Activated T-helper 2 cell treated with anti-CD3 and anti-CD28 coated beads, Interferon-gamma antibody, Interleukin-2, Interleukin-4, amounts not matched to agents 10 μg/mL and 5 μg/mL and 100 μg/mL, durations not matched to agents 14 hours and 24 hours and 36 hours (primary cell): ENCODE measurements at regions of chr12 and their contacts with region 1.

Region 1: DNA sequence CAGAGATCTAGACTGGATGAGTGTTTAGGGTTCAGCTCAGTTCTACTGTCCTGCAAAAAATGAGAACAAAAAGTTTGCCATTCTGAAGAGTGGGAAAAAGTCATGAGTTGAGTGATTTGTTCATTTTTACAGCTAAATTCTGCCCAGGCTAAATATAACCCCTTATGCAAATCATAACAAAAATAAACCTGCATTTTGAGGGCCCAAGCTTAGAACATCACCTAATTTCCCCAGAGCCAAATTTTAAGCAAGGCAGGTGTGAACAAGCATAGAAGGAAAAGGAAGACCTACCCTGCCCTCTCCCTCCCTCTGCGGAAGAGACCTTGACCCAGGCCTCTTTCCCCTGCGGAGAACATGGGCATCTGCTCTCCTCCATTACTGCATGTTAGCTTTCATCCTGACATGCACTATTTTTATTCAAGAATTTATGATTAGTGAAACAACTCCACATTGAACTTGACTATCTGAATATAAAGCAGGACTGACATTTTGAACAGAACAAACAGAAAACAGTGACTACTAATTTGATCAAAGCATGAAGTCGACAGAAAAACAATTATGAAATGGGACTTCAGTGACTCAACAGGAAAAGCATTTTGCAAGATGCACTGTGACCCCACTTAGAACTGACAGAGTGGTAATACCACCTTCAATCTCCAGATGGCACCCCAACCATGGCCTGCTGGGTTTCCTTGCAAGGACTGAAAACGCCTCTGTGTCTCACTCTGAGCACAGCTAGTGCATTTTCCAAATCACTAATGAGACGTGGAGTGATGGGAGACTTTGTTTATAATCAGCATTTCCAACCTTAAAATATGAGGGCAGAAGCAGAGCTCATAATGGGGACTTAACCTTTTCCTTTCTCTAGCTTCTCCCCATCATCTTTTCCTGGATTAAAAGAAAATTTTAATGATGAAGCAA is 30.9 kb upstream of the SELPLG start:
- DNase-seq: peak; percentile 75
- H3K4me3 Mint-ChIP-seq: no peak overlapping the region
- H3K27ac Mint-ChIP-seq: peak overlapping the region; percentile 85
- H3K4me1 Mint-ChIP-seq: peaks cover 24% of the 10 kb centered on the region
- H3K27me3 Mint-ChIP-seq: no peaks in the 10 kb centered on the region

Region 2: DNA sequence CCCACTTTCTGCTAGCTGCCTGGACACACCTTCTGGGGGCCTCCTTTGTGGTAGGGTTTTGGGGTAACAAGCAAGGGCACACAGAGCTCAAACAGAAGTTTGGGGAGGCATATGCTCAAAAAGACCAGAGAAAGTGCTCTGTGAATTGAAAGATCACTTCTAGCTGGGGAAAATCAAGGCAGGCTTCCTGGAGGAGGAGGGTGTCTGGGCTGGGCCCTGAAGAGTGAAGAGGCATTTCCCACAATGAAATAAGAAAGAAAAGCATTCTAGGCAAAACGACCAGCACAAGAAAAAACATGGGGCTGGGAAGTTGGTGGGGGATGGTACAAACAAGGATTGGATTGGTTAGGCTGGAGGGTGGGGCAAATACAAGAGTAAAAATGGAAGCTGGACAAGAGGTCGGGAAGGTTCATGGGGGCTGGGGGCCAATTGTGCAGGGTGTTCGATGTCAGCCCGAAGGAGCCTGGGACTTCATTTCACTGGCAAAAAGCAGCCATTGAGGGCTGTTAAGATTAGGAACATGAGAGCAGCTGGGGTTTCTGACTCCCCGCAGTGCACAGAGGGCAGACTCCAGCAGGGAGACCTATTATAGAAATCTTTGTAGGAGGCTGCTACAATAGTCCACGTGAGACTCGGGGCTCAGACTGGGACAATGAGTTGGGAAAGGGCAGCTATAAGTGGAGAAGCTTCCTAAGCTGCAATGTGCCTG is 273.9 kb before region 1 on chr12:
- intact Hi-C with region 1: no loop called
- DNase-seq: no peak
- H3K4me3 Mint-ChIP-seq: no peak overlapping the region
- H3K27ac Mint-ChIP-seq: no peak overlapping the region
- H3K4me1 Mint-ChIP-seq: no peaks in the 10 kb centered on the region
- H3K27me3 Mint-ChIP-seq: no peaks in the 10 kb centered on the region

Region 3: DNA sequence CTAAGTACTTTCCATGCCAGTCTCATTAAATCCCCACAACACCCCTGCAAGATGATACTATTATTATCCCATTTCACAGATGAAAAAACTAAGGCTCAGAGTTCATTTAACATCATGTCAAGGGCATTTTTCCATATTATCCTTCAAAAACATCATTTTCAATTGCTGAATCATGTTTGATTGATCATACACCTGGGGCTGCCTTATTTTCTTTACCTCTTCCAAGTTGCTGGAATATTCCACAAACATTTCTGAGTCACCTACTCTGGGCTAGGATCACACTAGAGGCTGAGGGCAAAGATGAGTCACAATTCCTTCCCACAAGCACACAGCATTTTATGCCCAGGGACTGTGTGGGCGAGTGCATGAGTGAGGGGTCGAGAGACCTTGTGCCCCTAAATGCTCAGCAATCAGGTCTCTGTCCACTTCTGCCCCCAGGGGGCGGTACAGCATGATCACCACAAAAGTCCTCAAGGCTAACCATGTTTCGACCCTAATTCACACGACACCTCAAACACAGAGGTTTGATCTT is 52.6 kb before region 1 on chr12:
- intact Hi-C with region 1: no loop called
- DNase-seq: peak; percentile 28
- H3K4me3 Mint-ChIP-seq: no peak overlapping the region
- H3K27ac Mint-ChIP-seq: no peak overlapping the region
- H3K4me1 Mint-ChIP-seq: peaks cover 18% of the 10 kb centered on the region
- H3K27me3 Mint-ChIP-seq: peaks cover 10% of the 10 kb centered on the region

Region 4: DNA sequence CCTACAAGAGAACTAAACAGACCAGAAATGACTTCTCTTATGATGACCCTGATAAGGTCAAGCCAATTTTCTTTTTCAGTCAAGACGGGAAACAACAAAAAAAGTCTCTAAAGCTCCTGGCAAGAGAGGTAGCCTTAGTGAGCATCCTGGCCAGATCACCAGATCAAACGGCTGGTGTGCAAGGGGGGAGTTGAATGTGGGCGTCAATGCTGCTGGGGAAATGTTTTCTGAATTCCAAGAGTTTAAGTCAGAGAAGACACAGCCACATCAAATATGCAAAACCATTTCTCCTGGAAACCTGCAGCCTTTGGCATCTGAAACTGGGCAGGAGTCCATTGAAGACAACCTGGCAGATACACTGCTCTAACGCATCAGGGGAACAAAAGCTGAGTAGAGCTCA is 14.9 kb before region 1 on chr12:
- intact Hi-C with region 1: loop called (anchors 2 kb)
- DNase-seq: no peak
- H3K4me3 Mint-ChIP-seq: no peak overlapping the region
- H3K27ac Mint-ChIP-seq: peak overlapping the region; percentile 73
- H3K4me1 Mint-ChIP-seq: peaks cover 49% of the 10 kb centered on the region
- H3K27me3 Mint-ChIP-seq: no peaks in the 10 kb centered on the region

Region 5: GRCh38 chr12:108678104-108678730 is 13.6 kb after region 1 on chr12:
- intact Hi-C with region 1: no loop called
- DNase-seq: no peak
- H3K4me3 Mint-ChIP-seq: no peak overlapping the region
- H3K27ac Mint-ChIP-seq: no peak overlapping the region
- H3K4me1 Mint-ChIP-seq: peaks cover 18% of the 10 kb centered on the region
- H3K27me3 Mint-ChIP-seq: no peaks in the 10 kb centered on the region

Region 6: DNA sequence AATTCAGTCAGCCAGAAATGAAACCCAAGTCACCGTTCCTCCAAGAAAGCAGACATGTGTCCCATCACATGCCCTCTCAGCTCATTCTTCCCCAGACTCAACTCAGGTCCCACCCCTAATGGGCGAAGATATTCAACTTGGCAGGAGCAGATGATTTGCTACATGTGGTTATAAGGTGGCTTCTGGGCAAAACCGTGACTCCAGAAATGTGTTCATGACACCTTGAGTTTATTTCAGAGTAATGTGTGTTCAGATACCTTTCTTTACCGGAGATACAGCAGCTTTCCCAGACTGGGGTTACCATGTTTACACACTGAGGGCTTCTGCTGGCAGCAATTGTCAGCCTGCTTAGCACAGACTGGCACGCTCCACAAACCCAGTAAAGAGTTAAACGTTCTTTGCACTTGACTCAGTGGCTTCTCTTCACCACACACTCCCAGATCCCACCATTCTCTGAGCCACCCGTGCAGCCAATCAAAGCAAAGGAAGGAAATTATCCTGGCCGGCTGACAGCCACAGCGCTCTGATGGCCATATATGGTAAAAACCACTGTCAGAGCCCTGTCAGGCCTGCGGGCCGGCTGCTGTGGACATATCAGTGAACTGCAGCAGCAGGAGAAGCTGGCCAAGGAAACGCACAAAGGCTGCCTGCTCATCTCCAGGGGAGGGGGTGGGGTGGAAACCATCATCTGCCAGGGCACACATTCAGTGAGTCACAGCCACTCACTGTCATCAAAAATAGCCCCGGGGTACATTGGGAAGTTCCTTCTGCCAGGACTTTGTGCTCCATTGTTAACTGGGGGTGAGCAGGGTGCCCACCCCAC is 26.8 kb after region 1 on chr12:
- intact Hi-C with region 1: loop called (anchors 1 kb)
- DNase-seq: peak; percentile 55
- H3K4me3 Mint-ChIP-seq: peak overlapping the region; percentile 62
- H3K27ac Mint-ChIP-seq: peak overlapping the region; percentile 99
- H3K4me1 Mint-ChIP-seq: peaks cover 64% of the 10 kb centered on the region
- H3K27me3 Mint-ChIP-seq: no peaks in the 10 kb centered on the region

Region 7: DNA sequence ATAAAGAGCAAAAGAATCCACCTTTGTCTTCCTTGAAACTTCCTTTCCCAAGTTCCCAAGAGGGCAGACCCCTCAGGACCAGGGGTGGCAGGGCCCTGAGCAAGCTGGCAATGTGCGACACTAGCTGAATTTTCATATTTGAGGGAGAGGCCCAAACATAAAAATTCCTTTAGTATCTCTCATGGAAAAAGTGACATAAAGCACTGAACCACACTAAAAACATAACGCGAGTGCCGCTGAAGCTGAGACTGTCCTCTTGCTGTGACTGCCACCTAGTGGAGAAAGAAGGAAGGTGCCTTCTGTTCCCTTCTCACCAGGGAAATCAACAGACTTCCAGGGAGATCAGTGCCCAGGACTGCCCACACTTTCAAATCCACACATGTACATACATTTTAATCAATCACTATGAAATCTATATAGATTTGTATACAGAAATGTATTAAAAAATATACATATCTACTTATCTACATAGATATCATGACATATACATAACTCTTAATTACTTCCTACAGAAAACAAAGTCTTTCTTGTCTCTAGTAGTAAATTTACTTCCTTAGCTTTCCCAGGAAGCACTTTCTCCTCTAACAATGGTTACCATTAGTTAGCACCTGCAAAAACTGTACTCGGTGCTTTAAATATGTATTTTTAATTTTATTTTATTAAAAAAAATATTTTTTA is 139.0 kb after region 1 on chr12:
- intact Hi-C with region 1: loop called (anchors 1 kb)
- DNase-seq: peak; percentile 50
- H3K4me3 Mint-ChIP-seq: no peak overlapping the region
- H3K27ac Mint-ChIP-seq: peak overlapping the region; percentile 60
- H3K4me1 Mint-ChIP-seq: peaks cover 9% of the 10 kb centered on the region
- H3K27me3 Mint-ChIP-seq: no peaks in the 10 kb centered on the region

Region 8: DNA sequence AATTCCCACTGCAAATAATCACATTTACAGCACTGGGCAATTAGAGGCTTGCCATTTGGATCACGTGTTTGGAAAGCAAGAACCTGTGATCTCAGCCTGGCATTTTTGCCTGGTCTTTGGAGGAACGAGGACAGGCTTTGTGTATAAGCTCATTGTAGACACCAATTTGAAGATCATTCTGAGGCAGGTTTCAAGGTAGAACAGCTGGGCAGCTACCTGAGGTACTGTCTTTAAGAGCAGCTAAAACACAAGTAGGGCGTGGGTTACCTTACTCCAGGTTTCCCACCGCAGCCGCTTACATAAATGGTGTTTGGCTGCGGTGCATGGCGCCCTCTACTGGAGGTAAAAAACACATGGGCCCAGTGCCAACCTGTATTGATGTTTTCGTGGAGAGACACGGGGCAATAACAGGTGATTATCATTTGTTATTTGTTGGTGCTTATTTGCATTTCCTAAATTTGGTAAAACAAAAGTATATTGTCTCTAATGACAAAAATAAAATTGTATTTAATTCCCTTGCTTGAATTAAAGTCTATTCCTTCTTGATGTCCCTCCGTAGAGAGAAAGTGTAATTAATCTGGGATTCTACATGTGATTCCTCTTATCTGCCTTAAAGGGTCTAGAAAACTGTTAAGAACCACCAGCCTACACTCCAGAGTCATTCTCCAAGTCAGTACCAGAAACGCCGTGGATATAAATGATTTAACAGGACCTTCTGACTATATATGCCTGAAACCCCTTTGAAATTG is 286.6 kb after region 1 on chr12:
- intact Hi-C with region 1: loop called (anchors 1 kb)
- DNase-seq: peak; percentile 52
- H3K4me3 Mint-ChIP-seq: no peak overlapping the region
- H3K27ac Mint-ChIP-seq: no peak overlapping the region
- H3K4me1 Mint-ChIP-seq: no peaks in the 10 kb centered on the region
- H3K27me3 Mint-ChIP-seq: peaks cover 14% of the 10 kb centered on the region